Vagina (tissue), 2 donors: ENCODE measurements at regions of chr10 and their contacts with region 1.

Region 1: GRCh38 chr10:68800196-68800595 is 27.1 kb upstream of the STOX1 start:
- DNase-seq: no peak
- H3K4me3 ChIP-seq: no peak overlapping the region
- H3K27ac ChIP-seq: no peak overlapping the region
- H3K4me1 ChIP-seq: no peaks in the 10 kb centered on the region
- H3K27me3 ChIP-seq: no peaks in the 10 kb centered on the region
- CTCF ChIP-seq: no peak
- POLR2A ChIP-seq: no peak

Region 2: DNA sequence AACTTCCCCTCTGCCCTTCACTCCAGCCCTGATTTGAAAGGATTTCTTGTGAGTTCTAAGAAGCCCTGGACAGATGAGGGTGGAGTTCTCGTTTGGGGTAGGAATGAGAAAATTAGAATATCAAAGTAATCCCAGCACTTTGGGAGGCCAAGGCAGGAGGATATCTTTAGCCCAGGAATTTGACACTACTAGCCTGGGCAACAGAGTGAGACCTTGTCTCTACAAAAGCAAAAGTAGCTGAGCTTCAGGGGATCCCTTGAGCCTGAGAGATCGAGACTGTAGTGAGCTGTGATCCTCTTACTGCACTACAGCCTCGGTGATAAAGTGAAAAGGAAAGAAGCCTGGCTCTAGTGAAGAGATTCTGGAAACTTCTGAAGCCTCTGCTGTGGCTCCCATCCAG is 163.9 kb before region 1 on chr10:
- intact Hi-C with region 1: no loop called
- DNase-seq: no peak
- H3K4me3 ChIP-seq: no peak overlapping the region
- H3K27ac ChIP-seq: no peak overlapping the region
- H3K4me1 ChIP-seq: no peaks in the 10 kb centered on the region
- H3K27me3 ChIP-seq: no peaks in the 10 kb centered on the region
- CTCF ChIP-seq: no peak
- POLR2A ChIP-seq: no peak

Region 3: DNA sequence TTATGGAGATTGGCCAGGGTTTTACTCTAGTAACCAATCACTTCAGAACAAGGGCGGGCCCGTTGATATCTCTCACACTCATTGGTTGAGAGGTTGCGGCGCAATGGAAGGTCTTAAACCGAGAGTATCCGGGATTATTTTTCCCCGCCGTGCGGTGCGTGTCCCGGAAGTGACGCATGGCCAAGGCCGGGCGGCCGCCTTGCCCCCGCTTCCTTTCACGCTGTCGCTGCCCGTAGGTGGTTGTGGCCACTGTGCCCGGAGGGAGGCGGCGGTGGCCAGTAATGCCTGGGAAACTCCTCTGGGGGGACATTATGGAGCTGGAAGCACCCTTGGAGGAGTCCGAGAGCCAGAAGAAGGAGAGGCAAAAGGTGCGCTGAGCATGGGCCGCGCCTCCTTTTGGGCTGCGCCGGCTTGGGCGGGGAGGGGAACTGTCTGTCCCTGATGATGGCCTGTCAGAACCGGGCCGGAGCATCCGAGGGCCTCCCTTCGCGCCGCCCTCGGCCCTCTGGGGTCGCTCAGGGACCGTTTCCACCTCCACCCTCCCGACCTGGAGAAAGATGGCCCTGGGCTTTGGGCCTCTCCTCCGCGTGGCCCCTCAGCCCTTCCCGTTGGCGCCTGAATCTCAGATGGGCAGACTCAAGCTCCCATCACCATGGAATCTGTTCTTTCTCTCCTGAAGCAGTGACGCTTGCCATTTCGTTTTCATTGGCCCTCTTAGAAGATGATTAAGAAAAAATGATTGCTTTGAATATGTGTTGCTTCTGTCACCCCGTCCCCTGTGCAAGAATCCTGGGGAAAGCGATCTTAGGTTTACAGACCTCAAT is 101.1 kb after region 1 on chr10 and contains the start of gene DDX50:
- intact Hi-C with region 1: loop called (anchors 10 kb)
- DNase-seq: peak; percentile 97 to 99
- H3K4me3 ChIP-seq: peak within 1 kb of the TSS; percentile 84 to 85
- H3K27ac ChIP-seq: peak within 1 kb of the TSS; percentile 99
- H3K4me1 ChIP-seq: peaks cover 44% of the 10 kb centered on the region
- H3K27me3 ChIP-seq: no peaks in the 10 kb centered on the region
- CTCF ChIP-seq: no peak
- POLR2A ChIP-seq: peak; percentile 29 to 57
- total RNA-seq, gene DDX50: 28.7 TPM